ENCODE measurements at regions of chr2 and their contacts with region 1.

Region 1: GRCh38 chr2:177164584-177165052 is 48.0 kb upstream of the HNRNPA3 start:
- DNase-seq: peak; percentile 82 to 94 (median 91)
- ATAC-seq: peak; percentile 88 to 92
- H3K4me3 ChIP-seq: peak overlapping the region; percentile 66
- H3K27ac ChIP-seq: no peak overlapping the region
- H3K4me1 ChIP-seq: no peaks in the 10 kb centered on the region
- H3K27me3 ChIP-seq: no peaks in the 10 kb centered on the region

Region 2: DNA sequence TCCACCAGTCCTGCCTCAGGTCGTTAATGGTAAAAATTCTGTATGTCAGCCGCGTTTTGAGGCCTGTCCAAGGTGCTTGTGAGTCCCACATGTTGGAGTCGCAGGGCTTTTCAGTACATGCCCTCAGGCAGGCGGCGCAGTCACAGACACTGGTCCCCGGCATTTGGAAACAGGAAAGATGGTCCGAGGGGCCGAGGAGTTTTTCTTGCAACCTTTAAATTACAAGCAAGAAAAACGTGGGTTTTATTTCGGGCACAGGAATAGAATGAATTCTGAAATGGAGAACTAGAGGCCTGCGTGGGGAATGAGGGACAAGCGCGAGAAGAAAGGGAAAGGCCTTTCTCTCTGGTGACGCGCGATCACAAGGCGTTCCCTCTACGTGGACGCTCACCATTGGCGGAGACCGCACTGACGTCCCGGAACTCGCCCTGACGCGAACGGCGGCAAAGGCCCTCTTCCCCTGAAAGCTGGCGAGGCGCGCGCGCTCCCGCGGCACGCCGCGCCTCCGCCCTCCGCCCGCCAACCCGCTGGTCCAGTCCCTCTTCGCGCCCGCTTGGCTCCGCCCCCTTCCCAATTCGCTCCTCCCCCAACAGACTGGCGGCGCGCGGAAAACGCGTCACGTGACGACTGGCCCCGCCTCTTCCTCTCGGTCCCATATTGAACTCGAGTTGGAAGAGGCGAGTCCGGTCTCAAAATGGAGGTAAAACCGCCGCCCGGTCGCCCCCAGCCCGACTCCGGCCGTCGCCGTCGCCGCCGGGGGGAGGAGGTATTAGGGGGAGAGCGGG is 47.7 kb after region 1 on chr2 and contains the start of gene HNRNPA3:
- intact Hi-C with region 1: loop called in 1 of 4 experiments (anchors 10 kb)
- DNase-seq: peak; percentile 99 to 100 (median 99)
- ATAC-seq: peak; percentile 96 to 97
- H3K4me3 ChIP-seq: peak within 1 kb of the TSS; percentile 97
- H3K27ac ChIP-seq: peak within 1 kb of the TSS; percentile 100
- H3K4me1 ChIP-seq: peaks cover 3% of the 10 kb centered on the region
- H3K27me3 ChIP-seq: no peaks in the 10 kb centered on the region
- total RNA-seq, gene HNRNPA3: 66.9 to 110 (median 84.2) TPM

Region 3: DNA sequence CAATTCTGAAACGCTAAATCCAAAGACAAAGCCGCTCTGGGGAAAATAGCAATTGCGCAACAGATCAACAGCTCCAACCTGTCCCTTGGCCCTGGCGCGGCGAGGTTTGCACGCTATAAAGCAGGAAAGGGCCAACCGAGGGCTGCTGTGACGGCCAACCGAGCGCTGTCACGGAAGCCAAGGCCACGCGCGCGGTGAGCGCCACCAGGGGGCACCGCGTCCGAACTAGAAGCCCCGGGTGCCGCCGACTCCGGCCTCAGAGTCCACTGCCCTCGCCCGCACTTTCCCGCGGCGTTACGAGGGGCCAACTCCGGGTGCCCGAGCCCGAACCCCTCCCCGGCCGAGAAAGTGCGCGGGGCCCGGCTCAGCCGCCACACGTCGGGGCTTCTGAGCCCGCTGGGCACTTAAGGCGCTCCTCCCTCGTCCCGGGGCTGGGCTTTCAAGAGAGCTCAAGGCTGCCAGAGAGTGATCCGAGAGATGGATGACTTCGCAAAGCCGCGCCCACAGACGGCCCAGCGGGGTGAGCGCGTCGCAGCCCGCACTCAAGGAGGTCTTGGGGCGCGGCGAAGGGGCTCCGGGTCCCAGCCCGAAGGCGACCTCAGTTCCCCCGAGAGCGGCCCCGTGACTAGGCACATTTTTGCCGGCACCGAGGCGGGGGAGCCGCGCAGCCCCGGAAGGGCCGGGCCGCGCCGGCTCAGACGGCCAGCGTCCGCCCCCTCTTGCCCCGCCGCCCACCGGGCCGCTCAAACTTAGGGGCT is 99.0 kb after region 1 on chr2:
- intact Hi-C with region 1: loop called in 3 of 4 experiments (anchors 5 to 10 kb)
- DNase-seq: peak; percentile 98 to 100 (median 99)
- ATAC-seq: peak; percentile 83 to 85
- H3K4me3 ChIP-seq: peak overlapping the region; percentile 90
- H3K27ac ChIP-seq: peak overlapping the region; percentile 100
- H3K4me1 ChIP-seq: no peaks in the 10 kb centered on the region
- H3K27me3 ChIP-seq: no peaks in the 10 kb centered on the region

Region 4: GRCh38 chr2:177296040-177296439 is 131.4 kb after region 1 on chr2:
- intact Hi-C with region 1: loop called in 1 of 4 experiments (anchors 10 kb)
- DNase-seq: no peak
- ATAC-seq: peak in 1 of 2 donors; percentile 57
- H3K4me3 ChIP-seq: no peak overlapping the region
- H3K27ac ChIP-seq: no peak overlapping the region
- H3K4me1 ChIP-seq: peaks cover 2% of the 10 kb centered on the region
- H3K27me3 ChIP-seq: no peaks in the 10 kb centered on the region

Region 5: DNA sequence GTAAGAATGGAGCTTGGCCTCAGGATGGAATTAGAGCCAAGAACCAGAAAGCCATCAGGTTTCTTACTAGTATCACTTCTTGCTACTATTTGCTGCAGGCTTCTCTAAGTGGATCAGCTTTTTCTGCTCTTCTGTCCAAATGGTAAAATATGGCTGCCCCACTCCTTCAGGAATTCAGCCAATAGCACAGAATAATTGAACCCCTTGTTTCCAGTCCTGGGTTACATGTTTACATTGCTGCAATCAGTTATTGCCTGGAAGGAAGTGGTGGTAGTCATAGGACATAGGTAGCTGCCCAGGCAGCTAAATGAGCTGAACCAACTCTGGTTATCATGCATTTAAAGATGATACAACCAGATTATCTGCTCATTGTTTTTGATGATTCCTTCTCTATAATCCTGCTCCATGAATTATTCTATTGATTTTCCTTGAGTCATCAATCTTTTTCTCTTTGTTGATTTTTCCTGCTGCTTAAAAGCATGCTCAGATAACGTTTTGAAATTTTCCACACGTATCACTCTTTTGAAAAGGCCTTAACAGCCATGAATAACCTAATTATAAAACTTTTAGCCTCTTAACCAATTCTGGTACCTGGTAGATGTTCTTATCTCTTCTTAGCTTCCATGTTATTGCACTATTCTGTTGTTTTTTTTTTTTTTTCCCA is 240.5 kb after region 1 on chr2:
- intact Hi-C with region 1: loop called in 1 of 4 experiments (anchors 5 kb)
- DNase-seq: no peak
- ATAC-seq: no peak
- H3K4me3 ChIP-seq: no peak overlapping the region
- H3K27ac ChIP-seq: no peak overlapping the region
- H3K4me1 ChIP-seq: no peaks in the 10 kb centered on the region
- H3K27me3 ChIP-seq: no peaks in the 10 kb centered on the region

Region 6: DNA sequence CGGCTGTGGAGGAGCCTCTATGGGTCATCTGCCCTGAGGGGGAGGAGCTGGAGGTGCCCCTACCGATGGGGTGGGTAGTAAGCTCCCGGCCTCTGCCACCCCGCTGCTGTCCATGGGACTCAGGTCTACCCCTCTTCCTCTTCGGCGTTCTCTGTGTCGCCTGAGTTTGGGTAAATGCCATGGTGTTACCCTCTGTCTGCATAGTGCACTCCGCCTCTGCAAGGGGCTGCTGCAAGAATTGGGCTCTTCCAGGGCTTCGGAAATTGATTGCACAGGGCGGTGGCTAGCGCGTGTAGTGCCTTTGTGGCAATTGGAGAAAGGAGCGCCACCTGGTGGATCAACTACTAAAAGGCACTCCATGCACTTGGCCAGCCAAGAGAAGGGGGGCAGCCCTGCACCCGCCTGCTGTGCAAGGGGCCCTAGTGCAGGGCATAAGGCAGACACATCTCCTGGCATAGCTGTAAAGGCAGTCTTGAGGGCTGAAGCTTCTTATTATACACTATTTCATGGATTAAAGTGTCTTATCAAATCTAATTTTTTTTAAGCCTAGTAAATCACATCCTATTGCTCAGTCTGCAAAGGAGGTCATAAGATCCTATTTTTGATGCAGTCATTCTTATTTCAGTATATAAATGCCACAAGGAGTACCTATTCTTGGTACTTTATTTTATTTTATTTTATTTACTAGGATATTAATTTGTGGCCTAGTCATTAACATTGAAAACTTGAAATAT is 599.1 kb after region 1 on chr2:
- intact Hi-C with region 1: loop called in 2 of 4 experiments (anchors 10 kb)
- DNase-seq: peak; percentile 76 to 85 (median 83)
- ATAC-seq: peak; percentile 86 to 88
- H3K4me3 ChIP-seq: no peak overlapping the region
- H3K27ac ChIP-seq: no peak overlapping the region
- H3K4me1 ChIP-seq: no peaks in the 10 kb centered on the region
- H3K27me3 ChIP-seq: no peaks in the 10 kb centered on the region